Stomach (tissue), 19 donors: ENCODE measurements at regions of chr7 and their contacts with region 1.

Region 1: GRCh38 chr7:38409531-38409930 is 136.1 kb upstream of the TARP start:
- DNase-seq: no peak
- H3K4me3 ChIP-seq: no peak overlapping the region
- H3K27ac ChIP-seq: no peak overlapping the region
- H3K4me1 ChIP-seq: no peaks in the 10 kb centered on the region
- H3K27me3 ChIP-seq: no peaks in the 10 kb centered on the region
- CTCF ChIP-seq: no peak
- EP300 ChIP-seq: no peak
- POLR2A ChIP-seq: no peak

Region 2: GRCh38 chr7:38052786-38053185 is 356.7 kb before region 1 on chr7:
- intact Hi-C with region 1: no loop called
- DNase-seq: no peak
- H3K4me3 ChIP-seq: no peak overlapping the region
- H3K27ac ChIP-seq: no peak overlapping the region
- H3K4me1 ChIP-seq: no peaks in the 10 kb centered on the region
- H3K27me3 ChIP-seq: no peaks in the 10 kb centered on the region
- CTCF ChIP-seq: no peak
- EP300 ChIP-seq: no peak
- POLR2A ChIP-seq: no peak

Region 3: GRCh38 chr7:39510864-39511354 is 1101.4 kb after region 1 on chr7:
- intact Hi-C with region 1: loop called (anchors 10 kb)
- DNase-seq: no peak
- H3K4me3 ChIP-seq: no peak overlapping the region
- H3K27ac ChIP-seq: no peak overlapping the region
- H3K4me1 ChIP-seq: no peaks in the 10 kb centered on the region
- H3K27me3 ChIP-seq: no peaks in the 10 kb centered on the region
- CTCF ChIP-seq: no peak
- EP300 ChIP-seq: no peak
- POLR2A ChIP-seq: no peak